AG04449 (cell line): ENCODE measurements at regions of chr2 and their contacts with region 1.

Region 1: DNA sequence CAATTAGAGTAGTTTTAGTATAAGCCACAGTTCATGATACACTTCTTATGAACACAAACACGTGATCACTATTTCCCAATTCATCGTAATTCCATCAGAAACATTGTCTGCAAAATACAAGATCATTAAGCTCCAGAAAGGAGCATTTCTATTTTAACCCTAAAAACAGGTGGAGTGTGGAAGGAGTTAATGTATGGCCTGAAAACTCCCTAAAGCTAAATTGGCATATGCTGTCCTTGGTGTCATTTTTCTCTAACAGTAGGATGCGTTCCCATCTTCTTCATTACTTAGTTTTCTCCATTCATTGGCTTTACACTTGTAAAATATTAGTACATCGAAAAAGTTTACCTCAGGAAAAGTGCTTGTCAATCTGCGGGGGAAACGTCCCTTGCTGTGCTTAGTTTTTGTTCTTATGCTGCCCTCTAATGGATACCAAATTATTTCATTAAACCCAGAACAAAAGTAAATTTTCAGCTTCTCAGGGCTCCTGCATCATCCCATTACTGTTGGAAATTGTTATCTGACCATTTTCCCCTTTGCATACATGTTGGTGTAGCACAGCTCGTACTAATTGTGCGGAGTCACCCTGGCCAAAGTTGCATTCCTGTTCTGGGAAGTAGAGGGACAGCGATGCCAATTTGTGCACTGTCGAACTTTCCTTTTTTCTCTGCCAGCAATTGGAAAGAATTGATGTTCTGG is 153.4 kb downstream of the GPD2 start:
- DNase-seq: no peak
- H3K4me3 ChIP-seq: no peak overlapping the region
- CTCF ChIP-seq: peak; percentile 35

Region 2: DNA sequence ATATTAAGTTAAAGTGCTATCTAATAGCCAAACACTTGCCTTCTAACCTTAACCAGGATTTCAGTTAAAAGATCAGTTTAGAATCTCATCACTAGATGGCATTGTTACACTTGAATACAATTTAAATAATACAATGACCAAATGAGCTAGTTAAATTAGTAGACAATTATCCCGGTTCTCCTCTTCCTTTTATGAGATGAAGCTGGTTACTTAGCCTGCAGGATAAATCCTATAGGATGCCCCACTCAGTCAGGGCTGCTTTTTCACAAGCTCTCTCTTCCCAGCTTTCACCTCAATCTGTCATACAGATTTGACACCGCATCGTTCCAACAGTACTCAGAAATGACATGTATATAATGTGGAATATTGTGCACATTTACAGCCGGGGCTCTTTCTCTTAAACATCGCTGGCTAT is 1212.3 kb before region 1 on chr2:
- CTCF ChIA-PET with region 1: interaction called, 17 read pairs
- POLR2A ChIA-PET with region 1: no interaction called
- DNase-seq: no peak
- H3K4me3 ChIP-seq: no peak overlapping the region
- CTCF ChIP-seq: peak; percentile 0

Region 3: GRCh38 chr2:156057647-156058046 is 531.9 kb before region 1 on chr2:
- CTCF ChIA-PET with region 1: no interaction called
- POLR2A ChIA-PET with region 1: no interaction called
- DNase-seq: no peak
- H3K4me3 ChIP-seq: no peak overlapping the region
- CTCF ChIP-seq: no peak

Region 4: DNA sequence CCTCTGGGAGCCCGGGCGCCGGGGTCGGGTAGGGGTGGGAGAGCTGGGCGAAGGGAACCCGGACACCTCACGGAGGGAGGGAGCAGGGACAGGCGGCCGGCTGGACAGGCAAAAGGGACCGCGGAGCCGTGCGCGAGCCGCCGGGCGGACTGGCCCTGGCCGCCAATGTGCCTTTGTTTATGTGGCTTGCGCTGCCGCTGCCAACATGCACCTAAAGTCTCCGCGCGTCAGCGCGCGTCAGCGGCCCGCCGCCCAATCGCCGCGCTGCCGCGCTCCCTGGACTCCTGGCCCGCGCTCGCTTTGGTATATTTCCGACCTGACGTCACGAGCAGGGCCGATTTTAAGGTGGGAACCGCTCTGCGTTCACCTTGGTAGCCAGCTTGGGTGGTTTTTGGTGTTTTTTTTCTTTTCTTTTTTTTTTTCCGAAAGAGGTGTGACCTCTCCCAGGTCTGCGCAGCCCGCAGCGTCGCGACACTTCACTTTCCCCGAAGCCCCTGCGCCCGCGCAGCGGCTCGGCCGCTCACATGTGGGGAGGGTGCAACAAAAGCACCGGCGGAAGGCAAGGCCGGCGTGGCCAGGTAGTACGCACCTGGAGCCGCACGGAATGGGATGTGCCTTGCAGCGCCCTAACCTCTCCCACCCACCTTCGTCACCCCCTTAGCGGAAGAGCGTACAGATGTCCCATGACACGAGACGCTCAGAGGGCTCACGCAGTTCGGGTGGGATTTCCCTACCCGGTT is 256.8 kb before region 1 on chr2 and contains the start of gene NR4A2:
- CTCF ChIA-PET with region 1: interaction called, 75 read pairs
- POLR2A ChIA-PET with region 1: interaction called, 5 read pairs
- DNase-seq: no peak
- H3K4me3 ChIP-seq: peak within 1 kb of the TSS; percentile 74
- CTCF ChIP-seq: no peak

Region 5: GRCh38 chr2:156341452-156342253 is 247.9 kb before region 1 on chr2:
- CTCF ChIA-PET with region 1: interaction called, 25 read pairs
- POLR2A ChIA-PET with region 1: no interaction called
- DNase-seq: no peak
- H3K4me3 ChIP-seq: peak overlapping the region; percentile 81
- CTCF ChIP-seq: no peak

Region 6: DNA sequence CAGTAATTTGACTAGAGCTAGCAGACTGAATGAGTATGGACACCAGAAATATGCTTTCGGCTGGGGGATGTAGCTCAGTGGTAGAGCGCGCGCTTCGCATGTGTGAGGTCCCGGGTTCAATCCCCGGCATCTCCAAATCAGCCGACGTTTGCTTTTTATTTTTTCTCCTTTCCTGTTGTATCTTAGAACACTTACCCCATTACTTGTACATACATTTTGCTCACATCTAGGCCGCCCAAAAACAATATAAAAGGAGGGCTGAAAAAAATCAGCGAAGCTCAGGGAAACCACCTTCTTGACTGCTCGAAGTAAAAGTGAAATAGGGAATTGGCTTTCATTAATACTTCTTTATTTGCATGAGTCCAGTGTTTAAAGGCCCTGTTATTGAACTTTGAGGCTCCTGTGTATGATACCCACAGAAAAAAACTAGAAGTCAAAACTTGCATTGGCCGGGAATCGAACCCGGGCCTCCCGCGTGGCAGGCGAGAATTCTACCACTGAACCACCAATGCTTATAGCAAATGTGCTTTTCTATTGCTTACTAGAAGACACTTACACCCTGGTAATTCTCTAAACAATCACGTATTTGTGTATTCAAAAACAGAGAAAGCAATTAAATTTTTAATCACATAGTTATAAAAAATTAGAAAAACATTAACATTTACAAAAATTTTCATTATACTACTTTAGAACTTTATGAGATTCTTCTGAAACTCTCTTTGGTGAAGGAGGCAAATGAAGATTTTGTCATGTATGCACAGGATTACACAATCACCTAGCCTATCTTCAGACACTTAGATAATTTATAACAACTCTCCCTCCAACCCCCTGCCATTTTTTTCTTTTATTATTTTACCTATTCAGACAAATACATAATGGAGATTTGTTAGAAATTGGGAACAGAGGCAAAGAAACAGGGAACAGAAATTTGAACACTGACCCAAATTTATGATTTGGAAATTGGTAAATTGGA is 188.5 kb before region 1 on chr2:
- CTCF ChIA-PET with region 1: interaction called, 11 read pairs
- POLR2A ChIA-PET with region 1: no interaction called
- DNase-seq: peak; percentile 47
- H3K4me3 ChIP-seq: peak overlapping the region; percentile 76
- CTCF ChIP-seq: no peak